MCF 10A (cell line): ENCODE measurements at regions of chr2 and their contacts with region 1.

Region 1: DNA sequence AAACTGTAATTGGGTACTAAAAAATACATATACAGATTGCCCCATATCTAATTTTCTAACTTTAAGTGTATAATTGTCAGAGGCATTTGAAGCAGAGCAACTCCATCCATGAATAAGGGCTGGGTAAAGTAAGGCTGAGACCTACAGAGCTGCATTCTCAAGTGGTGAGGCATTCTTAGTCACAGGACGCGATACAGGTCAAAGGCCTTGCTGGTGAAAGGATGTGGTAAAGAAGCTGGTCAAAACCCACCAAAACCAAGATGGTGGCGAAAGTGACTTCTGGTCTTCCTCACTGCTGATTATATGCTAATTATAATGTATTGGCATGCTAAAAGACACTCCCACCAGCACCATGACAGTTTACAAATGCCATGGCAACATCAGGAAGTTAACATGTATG is 50.0 kb downstream of the SLC8A1 start:
- DNase-seq: peak; percentile 70
- H3K4me3 Mint-ChIP-seq: no peak overlapping the region
- H3K27ac Mint-ChIP-seq: no peak overlapping the region
- H3K4me1 Mint-ChIP-seq: peaks cover 24% of the 10 kb centered on the region
- H3K27me3 Mint-ChIP-seq: no peaks in the 10 kb centered on the region
- CTCF ChIP-seq: no peak

Region 2: DNA sequence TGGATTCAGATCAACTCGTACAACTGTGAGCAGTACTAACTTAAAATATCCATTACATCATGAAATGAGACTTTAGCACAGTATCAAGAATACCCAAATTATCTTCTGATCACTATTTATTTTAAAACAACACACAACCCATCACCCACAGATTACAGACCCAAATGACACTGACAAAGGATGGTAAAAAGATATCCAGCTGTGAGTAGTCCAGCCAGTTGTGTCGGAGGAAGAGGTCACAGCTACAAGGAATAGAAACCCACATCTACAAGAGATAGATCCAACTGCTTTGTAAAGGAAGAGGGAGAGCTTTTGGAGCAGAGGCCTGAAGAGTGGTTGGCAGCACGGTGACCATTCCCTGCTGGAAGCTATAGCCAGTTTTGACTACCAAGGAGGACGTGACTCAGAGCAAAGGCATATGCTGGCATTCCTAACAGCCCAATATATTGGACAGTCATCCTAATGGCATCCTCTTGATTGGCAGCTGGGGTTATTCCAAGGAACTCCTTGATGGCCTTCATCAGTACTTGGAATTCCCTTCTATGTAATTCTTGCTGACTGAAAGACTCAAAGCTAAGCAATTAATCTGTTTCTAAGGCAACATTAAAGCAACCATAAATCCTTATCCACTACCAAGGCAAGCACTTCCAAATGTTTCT is 32.9 kb after region 1 on chr2:
- CTCF ChIA-PET with region 1: interaction called, 3 read pairs
- POLR2A ChIA-PET with region 1: interaction called, 6 read pairs
- intact Hi-C with region 1: loop called (anchors 5 kb)
- DNase-seq: peak; percentile 96
- H3K4me3 Mint-ChIP-seq: no peak overlapping the region
- H3K27ac Mint-ChIP-seq: peak overlapping the region; percentile 15
- H3K4me1 Mint-ChIP-seq: peaks cover 57% of the 10 kb centered on the region
- H3K27me3 Mint-ChIP-seq: no peaks in the 10 kb centered on the region
- CTCF ChIP-seq: no peak